ENCODE measurements at regions of chr9 and their contacts with region 1.

Region 1: DNA sequence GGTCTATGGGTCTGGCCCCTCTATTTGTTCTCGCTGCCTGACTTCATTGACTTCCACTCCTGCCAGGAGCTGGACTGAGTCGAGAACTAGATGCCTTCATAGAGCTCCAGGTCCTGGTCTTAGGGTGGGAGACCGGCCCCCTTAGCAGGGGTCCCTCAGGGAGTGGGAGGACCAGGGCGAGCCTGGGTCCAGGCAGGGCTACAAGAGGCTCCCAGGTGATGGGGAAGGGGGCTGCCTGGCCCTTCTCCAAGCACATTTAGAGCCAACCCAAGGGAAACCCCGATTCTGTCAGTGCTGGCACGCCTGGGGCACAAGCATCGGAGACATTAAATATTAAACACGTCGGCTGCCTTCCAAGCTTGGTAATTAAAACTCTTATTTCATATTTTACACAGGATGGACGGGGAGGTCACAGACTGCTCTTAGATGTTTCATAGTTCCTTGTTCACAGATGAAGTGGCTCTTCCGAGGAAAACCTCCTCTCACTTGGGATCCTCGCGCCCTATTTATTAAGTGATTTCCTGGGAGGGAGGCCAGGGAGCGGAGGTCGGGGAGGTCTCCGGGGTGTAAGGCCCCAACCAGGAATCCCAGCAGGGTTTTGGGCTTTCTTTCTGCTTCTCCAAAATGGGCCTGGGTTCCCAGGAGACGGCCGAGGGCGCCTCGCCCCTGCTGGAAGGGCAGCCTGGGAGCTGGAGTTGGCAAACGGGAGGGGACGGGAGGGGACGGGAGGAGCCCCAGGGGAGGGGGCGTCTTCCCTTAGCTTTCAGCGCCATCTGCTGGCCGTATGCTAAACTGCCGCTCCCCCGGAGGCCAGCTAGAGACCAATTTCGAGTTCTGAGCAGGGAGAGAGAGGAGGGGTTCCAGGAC is 23.4 kb upstream of the ZBTB43 start:
- DNase-seq: peak; percentile 71 to 74 (median 71)
- H3K4me3 ChIP-seq: no peak overlapping the region
- H3K4me3 Mint-ChIP-seq: peak overlapping the region in 1 of 2 donors; percentile 39
- H3K27ac ChIP-seq: no peak overlapping the region
- H3K27ac Mint-ChIP-seq: peak overlapping the region in 1 of 7 donors; percentile 24
- H3K4me1 ChIP-seq: no peaks in the 10 kb centered on the region
- H3K4me1 Mint-ChIP-seq: peaks cover 3% of the 10 kb centered on the region
- H3K27me3 ChIP-seq: peaks cover 0 to 3% of the 10 kb centered on the region in 2 donors
- H3K27me3 Mint-ChIP-seq: peaks cover 8 to 45% (median 22%) of the 10 kb centered on the region in 3 donors
- CTCF ChIP-seq: peak; percentile 96

Region 2: GRCh38 chr9:126604059-126605055 is 177.1 kb before region 1 on chr9:
- intact Hi-C with region 1: loop called (anchors 2 to 5 kb)
- DNase-seq: no peak
- H3K4me3 ChIP-seq: no peak overlapping the region
- H3K4me3 Mint-ChIP-seq: peak overlapping the region in 1 of 2 donors; percentile 9
- H3K27ac ChIP-seq: no peak overlapping the region
- H3K27ac Mint-ChIP-seq: no peak overlapping the region
- H3K4me1 ChIP-seq: no peaks in the 10 kb centered on the region
- H3K4me1 Mint-ChIP-seq: no peaks in the 10 kb centered on the region
- H3K27me3 ChIP-seq: peaks cover 7 to 48% of the 10 kb centered on the region in 2 donors
- H3K27me3 Mint-ChIP-seq: peaks cover 55 to 81% (median 65%) of the 10 kb centered on the region in 3 donors
- CTCF ChIP-seq: no peak

Region 3: GRCh38 chr9:126611592-126612325 is 169.7 kb before region 1 on chr9:
- intact Hi-C with region 1: loop called (anchors 2 to 5 kb)
- DNase-seq: peak; percentile 40 to 54 (median 42)
- H3K4me3 ChIP-seq: no peak overlapping the region
- H3K4me3 Mint-ChIP-seq: peak overlapping the region; percentile 20 to 86
- H3K27ac ChIP-seq: no peak overlapping the region
- H3K27ac Mint-ChIP-seq: no peak overlapping the region
- H3K4me1 ChIP-seq: peaks cover 10 to 20% of the 10 kb centered on the region in 2 donors
- H3K4me1 Mint-ChIP-seq: peaks cover 24% of the 10 kb centered on the region
- H3K27me3 ChIP-seq: peaks cover 37 to 85% of the 10 kb centered on the region in 2 donors
- H3K27me3 Mint-ChIP-seq: peaks cover 85 to 94% (median 88%) of the 10 kb centered on the region in 3 donors
- CTCF ChIP-seq: peak; percentile 84

Region 4: DNA sequence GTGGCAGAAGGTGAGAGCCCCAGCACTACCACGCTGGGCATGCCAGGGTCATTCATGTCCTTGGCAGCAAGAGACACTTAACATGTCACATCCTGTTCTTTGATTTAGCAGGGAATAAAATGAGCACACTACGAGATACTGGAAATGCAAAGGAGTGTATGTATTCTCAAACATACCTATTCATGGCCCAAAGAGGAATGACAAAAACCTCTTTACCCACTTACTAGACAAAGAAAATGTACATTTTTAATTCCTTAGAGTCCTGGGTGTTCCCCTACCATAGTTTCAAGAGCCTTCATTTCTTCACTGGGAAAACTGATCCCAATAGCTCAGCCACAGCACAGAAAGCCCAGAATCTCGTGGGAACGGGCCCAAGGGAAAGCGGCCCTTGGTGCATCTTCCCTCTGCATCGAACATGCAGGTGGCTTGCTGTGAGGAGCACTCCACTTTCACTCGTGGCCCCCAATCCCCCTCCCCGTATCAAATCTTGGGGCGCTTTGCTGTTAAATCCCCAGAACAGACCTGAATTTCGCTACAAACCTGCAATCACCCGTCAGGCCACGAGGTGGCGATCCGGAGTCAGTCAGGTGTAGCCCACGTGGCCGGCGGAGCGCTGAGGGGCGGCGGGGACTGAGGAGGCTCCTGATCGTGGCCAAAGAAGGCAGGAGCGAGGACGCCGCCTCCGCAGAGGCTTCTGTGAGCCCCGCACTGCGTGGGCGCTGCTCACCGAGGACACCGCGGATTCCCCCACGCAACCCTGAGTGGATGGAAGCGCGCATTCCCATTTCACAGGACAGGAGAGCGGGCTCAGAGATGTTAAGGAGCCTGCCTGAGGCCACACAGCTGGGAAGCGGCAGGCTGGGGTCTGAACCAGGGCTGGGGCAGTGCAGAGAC is 76.3 kb before region 1 on chr9:
- intact Hi-C with region 1: loop called (anchors 1 to 2 kb)
- DNase-seq: peak; percentile 69 to 75 (median 73)
- H3K4me3 ChIP-seq: peak overlapping the region in 2 of 3 experiments; percentile 0 to 72
- H3K4me3 Mint-ChIP-seq: peak overlapping the region; percentile 56 to 77
- H3K27ac ChIP-seq: no peak overlapping the region
- H3K27ac Mint-ChIP-seq: peak overlapping the region in 3 of 7 donors; percentile 41 to 49 (median 45)
- H3K4me1 ChIP-seq: peaks cover 12 to 21% of the 10 kb centered on the region in 2 donors
- H3K4me1 Mint-ChIP-seq: peaks cover 19% of the 10 kb centered on the region
- H3K27me3 ChIP-seq: peaks cover 0 to 18% of the 10 kb centered on the region in 2 donors
- H3K27me3 Mint-ChIP-seq: peaks cover 21 to 45% (median 32%) of the 10 kb centered on the region in 3 donors
- CTCF ChIP-seq: peak; percentile 90